Psoas muscle (tissue), 8 donors: ENCODE measurements at regions of chr12 and their contacts with region 1.

Region 1: DNA sequence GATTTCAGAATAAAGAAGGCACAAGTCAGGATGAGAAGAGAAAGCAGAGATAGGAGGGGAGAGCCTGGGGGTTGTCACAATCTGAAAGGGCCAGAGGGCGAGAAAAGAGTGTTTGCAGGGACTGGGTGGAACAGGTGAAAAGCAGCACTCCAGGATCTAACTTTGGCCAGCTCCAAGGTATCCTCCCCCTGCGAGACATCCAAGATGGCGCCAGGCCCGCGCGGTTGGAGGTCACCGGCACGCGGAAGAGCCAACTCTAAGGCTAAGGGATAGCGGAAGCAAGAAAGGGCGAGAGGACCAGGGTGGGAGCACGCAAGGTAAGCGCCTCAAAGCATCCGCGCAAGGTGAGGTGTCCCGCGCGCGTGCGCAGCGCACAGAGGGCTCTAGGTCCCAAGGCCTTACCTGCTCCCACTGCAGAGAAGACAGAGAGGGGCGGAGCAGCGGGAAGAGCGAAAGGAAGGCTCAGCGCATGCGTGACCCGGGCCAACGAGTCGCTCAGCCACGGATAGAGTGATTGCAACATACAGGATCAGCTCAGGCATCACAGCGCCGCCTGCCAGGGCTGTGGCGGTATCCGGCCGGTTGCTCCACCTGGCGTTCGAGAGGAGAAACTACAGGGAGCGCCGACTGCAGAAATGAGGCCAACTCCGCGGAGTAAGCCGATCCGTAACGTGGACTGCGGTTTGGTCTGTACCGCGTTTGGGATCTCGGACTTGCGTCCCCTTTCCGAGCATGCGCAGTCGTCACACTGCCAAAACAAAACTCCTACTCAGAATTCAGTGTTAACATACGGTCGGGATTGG is at the start of gene ATP5MC2:
- DNase-seq: peak; percentile 97 to 99
- ATAC-seq: peak; percentile 90 to 92 (median 92)
- H3K4me3 ChIP-seq: peak within 1 kb of the TSS; percentile 68
- H3K27ac ChIP-seq: peak within 1 kb of the TSS; percentile 93
- H3K4me1 ChIP-seq: peaks cover 30% of the 10 kb centered on the region
- H3K27me3 ChIP-seq: no peaks in the 10 kb centered on the region
- CTCF ChIP-seq: peak; percentile 99
- total RNA-seq, gene ATP5MC2: 349 to 495 (median 423) TPM

Region 2: GRCh38 chr12:53344824-53345485 is 330.9 kb before region 1 on chr12:
- intact Hi-C with region 1: loop called in 1 of 2 experiments (anchors 10 kb)
- DNase-seq: peak; percentile 79 to 88
- ATAC-seq: peak; percentile 87 to 97 (median 91)
- H3K4me3 ChIP-seq: peak overlapping the region; percentile 70
- H3K27ac ChIP-seq: peak overlapping the region; percentile 61
- H3K4me1 ChIP-seq: peaks cover 4% of the 10 kb centered on the region
- H3K27me3 ChIP-seq: no peaks in the 10 kb centered on the region
- CTCF ChIP-seq: peak; percentile 68

Region 3: DNA sequence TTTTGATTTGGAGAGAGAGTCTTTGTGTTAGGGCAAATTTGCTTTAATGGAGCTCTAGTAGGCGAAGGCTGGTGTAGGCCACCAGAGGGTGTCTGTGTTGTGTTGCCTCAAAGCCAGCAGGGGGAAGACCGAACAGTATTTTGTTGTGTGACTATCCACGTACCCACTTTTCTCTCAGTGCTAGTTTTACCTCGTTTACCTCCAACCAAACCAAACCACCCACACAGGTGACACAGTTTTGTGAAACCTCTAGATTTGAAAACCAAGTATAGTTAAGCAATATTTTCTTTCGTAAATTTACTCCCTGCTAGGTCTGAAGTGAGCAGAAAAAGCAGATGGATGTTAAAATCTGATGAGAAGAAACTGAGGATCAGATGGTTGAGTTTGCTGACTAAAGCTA is 132.3 kb before region 1 on chr12:
- intact Hi-C with region 1: loop called (anchors 2 to 5 kb)
- DNase-seq: peak in 1 of 2 donors; percentile 31
- ATAC-seq: peak; percentile 87 to 95 (median 90)
- H3K4me3 ChIP-seq: no peak overlapping the region
- H3K27ac ChIP-seq: peak overlapping the region; percentile 43
- H3K4me1 ChIP-seq: peaks cover 5% of the 10 kb centered on the region
- H3K27me3 ChIP-seq: no peaks in the 10 kb centered on the region
- CTCF ChIP-seq: peak; percentile 83

Region 4: DNA sequence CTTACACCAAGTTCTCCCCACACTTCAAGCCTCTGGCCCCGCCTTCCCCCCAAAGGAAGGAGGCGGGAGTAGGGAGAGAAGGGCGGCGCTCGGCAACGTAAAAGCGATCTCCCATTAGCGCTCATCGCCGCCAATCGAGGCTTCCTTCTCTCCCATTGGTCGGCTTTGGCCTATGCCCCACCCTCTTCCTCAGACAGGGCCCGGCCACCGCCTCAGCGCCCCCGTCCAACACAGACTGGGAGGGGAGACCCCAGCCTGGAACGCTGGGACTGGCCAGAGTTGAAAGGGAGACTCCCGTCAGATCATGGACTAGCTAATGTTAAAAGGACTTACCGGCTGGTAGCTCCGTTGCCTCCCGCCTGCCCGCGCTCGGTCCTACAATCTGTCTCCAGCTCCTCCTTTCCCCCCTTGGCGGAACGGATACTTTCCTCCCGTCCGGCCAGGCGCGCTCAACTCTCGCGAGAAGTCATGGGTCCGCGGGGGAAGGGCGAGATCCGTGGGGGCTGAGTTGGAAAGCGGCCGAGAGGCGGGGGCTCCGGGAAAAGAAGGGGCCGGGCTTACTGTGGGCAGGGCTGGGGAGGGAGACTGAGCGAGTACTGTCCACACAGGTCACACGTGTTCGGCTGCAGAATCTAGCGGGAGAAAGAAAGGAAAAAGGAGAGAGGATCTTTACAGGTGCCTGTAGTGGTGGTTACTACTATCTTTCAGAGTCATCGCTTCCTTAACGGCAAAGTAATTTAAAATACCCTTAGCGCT is 49.7 kb before region 1 on chr12 and contains the start of gene ATF7:
- intact Hi-C with region 1: loop called (anchors 1 to 5 kb)
- DNase-seq: peak; percentile 97 to 99
- ATAC-seq: peak; percentile 97 to 99 (median 98)
- H3K4me3 ChIP-seq: peak within 1 kb of the TSS; percentile 77
- H3K27ac ChIP-seq: peak within 1 kb of the TSS; percentile 95
- H3K4me1 ChIP-seq: peaks cover 36% of the 10 kb centered on the region
- H3K27me3 ChIP-seq: no peaks in the 10 kb centered on the region
- CTCF ChIP-seq: no peak
- total RNA-seq, gene ATF7: 25.4 to 32.3 (median 31.5) TPM

Region 5: DNA sequence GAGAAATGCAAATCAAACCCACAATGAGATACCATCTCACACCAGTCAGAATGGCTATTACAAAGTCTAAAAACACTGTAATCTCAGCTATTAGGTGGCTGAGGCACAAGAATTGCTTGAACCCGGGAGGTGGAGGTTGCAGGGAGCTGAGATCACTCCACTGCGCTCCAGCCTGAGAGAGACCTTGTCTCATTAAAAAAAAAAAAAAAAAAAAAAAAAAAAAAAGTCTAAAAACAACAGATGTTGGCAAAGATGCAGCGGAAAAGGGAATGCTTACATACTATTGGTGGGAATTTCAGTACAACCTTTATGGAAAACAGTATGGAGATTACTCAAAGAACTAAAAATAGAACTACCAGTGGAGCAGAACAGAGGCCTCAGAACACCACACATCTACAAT is 30.7 kb before region 1 on chr12:
- intact Hi-C with region 1: no loop called
- DNase-seq: no peak
- ATAC-seq: no peak
- H3K4me3 ChIP-seq: no peak overlapping the region
- H3K27ac ChIP-seq: no peak overlapping the region
- H3K4me1 ChIP-seq: no peaks in the 10 kb centered on the region
- H3K27me3 ChIP-seq: no peaks in the 10 kb centered on the region
- CTCF ChIP-seq: no peak